GM18951 (cell line): ENCODE measurements at regions of chr20 and their contacts with region 1.

Region 1: GRCh38 chr20:2005831-2006426 is 12.1 kb upstream of the PDYN start:
- POLR2A ChIP-seq: no peak

Region 2: GRCh38 chr20:2101865-2102584 is 96.1 kb after region 1 on chr20:
- in situ Hi-C with region 1: no loop called
- POLR2A ChIP-seq: peak; percentile 83

Region 3: GRCh38 chr20:2172305-2173175 is 166.6 kb after region 1 on chr20:
- in situ Hi-C with region 1: loop called (anchors 25 kb)
- POLR2A ChIP-seq: no peak